Panc1 (cell line): ENCODE measurements at regions of chrX and their contacts with region 1.

Region 1: GRCh38 chrX:24619647-24620046 is 27.5 kb downstream of the PCYT1B start:
- DNase-seq: no peak
- ATAC-seq: no peak
- H3K4me3 ChIP-seq: no peak overlapping the region
- H3K27ac ChIP-seq: no peak overlapping the region
- H3K4me1 ChIP-seq: no peaks in the 10 kb centered on the region
- H3K27me3 ChIP-seq: no peaks in the 10 kb centered on the region
- CTCF ChIP-seq: no peak

Region 2: GRCh38 chrX:24720036-24720435 is 100.4 kb after region 1 on chrX:
- CTCF ChIA-PET with region 1: no interaction called
- POLR2A ChIA-PET with region 1: interaction called, 14 read pairs
- in situ Hi-C with region 1: no loop called
- intact Hi-C with region 1: no loop called
- DNase-seq: no peak
- ATAC-seq: no peak
- H3K4me3 ChIP-seq: no peak overlapping the region
- H3K27ac ChIP-seq: no peak overlapping the region
- H3K4me1 ChIP-seq: no peaks in the 10 kb centered on the region
- H3K27me3 ChIP-seq: no peaks in the 10 kb centered on the region
- CTCF ChIP-seq: no peak

Region 3: DNA sequence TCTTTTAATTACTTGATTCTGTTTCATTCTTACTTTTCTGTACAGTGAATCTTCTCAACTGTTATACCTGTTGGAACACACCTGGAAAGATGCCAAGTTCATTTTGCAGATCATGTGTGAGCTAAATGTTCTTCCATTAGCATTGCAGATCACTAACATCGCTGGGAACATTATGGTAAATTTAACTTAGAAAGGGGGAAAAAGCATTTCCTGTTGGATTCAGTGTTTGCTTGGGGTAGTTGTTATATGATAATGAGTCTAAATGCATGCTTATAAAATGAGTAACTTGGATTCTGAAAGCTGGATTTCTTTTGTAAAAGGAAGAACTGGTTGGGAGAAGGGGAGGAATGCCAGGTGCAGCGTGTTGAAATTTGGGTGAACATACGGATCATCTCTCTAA is 121.7 kb after region 1 on chrX:
- CTCF ChIA-PET with region 1: no interaction called
- POLR2A ChIA-PET with region 1: no interaction called
- in situ Hi-C with region 1: no loop called
- intact Hi-C with region 1: no loop called
- DNase-seq: no peak
- ATAC-seq: no peak
- H3K4me3 ChIP-seq: no peak overlapping the region
- H3K27ac ChIP-seq: no peak overlapping the region
- H3K4me1 ChIP-seq: no peaks in the 10 kb centered on the region
- H3K27me3 ChIP-seq: no peaks in the 10 kb centered on the region
- CTCF ChIP-seq: no peak

Region 4: GRCh38 chrX:24760363-24761000 is 140.8 kb after region 1 on chrX:
- CTCF ChIA-PET with region 1: no interaction called
- POLR2A ChIA-PET with region 1: no interaction called
- in situ Hi-C with region 1: no loop called
- intact Hi-C with region 1: no loop called
- DNase-seq: no peak
- ATAC-seq: no peak
- H3K4me3 ChIP-seq: no peak overlapping the region
- H3K27ac ChIP-seq: no peak overlapping the region
- H3K4me1 ChIP-seq: no peaks in the 10 kb centered on the region
- H3K27me3 ChIP-seq: no peaks in the 10 kb centered on the region
- CTCF ChIP-seq: no peak